Left colon (tissue), 2 donors: ENCODE measurements at regions of chr3 and their contacts with region 1.

Region 1: DNA sequence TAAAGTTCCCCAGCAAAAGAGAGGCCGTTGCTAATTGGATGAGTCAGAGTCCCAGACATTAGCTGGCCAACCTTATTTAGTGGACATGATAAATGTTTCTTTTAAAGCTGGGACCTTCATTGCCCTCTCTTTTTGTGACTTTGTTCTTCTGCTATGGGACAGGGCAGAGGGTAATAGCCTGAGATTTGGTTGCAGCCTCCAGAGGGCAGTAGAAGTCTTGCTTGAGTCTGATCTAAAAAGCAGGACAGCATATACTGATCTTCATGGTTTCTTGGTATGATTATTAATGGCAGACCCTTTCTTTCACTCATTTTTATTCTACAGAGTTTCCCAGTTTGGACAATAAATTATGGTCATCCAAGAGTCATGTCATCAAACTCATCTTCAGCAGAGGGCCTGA is 25.1 kb upstream of the ZKSCAN7 start:
- DNase-seq: peak in 1 of 2 donors; percentile 20
- ATAC-seq: peak; percentile 46

Region 2: GRCh38 chr3:44418549-44418948 is 111.4 kb before region 1 on chr3:
- intact Hi-C with region 1: no loop called
- DNase-seq: no peak
- ATAC-seq: no peak

Region 3: GRCh38 chr3:44913868-44914468 is 384.0 kb after region 1 on chr3:
- intact Hi-C with region 1: loop called (anchors 5 to 10 kb)
- DNase-seq: peak; percentile 47 to 80
- ATAC-seq: peak; percentile 85